Activated CD8-positive, alpha-beta T cell treated with anti-CD3 and anti-CD28 coated beads, Interleukin-2, amount 10 ng/mL, durations not matched to agents 7 days and 5 days (primary cell): ENCODE measurements at regions of chr11 and their contacts with region 1.

Region 1: DNA sequence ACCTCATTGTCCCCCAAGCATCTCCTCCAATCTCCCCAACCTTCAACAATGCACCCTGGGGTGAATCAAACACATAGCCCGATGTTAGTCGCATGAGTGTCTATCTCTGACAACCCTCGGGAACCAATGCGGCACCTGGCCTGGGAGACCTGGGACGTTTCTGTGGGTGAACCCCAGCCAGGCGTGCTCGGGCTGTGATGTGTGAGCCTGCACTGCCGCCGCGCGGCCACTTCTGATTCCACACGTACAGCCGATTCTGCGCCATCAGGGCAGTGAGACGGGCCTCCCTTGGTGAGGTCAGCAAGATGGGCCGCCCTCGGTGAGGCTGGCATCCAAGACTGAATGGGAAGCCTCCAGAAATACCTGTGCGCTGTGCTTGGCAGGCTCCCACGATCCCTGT is 5.2 kb upstream of the H19 start:
- DNase-seq: no peak
- ATAC-seq: peak; percentile 57
- H3K4me3 Mint-ChIP-seq: no peak overlapping the region
- H3K27ac Mint-ChIP-seq: no peak overlapping the region
- H3K4me1 Mint-ChIP-seq: no peaks in the 10 kb centered on the region
- H3K27me3 Mint-ChIP-seq: no peaks in the 10 kb centered on the region

Region 2: DNA sequence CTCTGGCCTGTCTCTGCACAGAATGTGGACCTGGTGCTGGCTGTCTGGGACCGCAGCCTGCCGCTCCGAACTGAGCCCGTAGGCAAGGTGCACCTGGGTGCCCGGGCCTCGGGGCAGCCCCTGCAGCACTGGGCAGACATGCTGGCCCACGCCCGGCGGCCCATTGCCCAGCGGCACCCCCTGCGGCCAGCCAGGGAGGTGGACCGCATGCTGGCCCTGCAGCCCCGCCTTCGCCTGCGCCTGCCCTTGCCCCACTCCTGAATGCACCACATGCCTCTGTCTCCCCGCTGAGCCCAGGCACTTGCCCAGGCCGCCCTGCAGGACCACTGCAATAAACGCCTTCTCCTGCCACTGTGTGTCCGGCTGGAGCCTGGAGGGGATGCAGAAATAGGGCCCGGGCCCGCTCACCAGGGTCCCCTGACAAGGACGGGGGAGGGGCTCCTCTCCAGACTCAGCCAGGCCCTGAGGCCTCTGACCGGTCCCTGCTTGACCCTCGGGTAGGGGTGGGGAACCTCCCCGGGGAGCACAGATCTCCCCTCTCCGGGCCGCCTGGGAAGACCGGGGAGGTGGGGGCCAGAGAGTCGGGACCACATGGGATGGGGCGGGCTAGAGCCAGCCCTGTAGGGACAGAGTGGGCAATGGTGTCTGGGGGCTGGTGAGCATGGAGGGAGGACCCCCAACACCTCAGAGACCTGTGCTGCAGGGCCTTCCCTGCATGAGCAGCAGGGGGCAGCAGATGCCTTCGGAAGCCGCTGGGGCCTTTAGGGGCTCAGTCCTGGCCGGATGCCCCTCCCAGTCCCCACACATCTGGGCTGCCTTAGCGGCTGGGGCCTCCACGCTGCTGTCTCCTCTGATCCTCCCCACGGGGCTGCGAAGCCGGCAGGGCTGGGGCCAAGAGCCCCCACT is 165.4 kb before region 1 on chr11:
- CTCF ChIA-PET with region 1: interaction called, 38 read pairs
- POLR2A ChIA-PET with region 1: interaction called, 4 read pairs
- DNase-seq: peak; percentile 93
- ATAC-seq: peak; percentile 95
- H3K4me3 Mint-ChIP-seq: no peak overlapping the region
- H3K27ac Mint-ChIP-seq: no peak overlapping the region
- H3K4me1 Mint-ChIP-seq: peaks cover 8% of the 10 kb centered on the region
- H3K27me3 Mint-ChIP-seq: peaks cover 4% of the 10 kb centered on the region